Mammary epithelial cell (primary cell): ENCODE measurements at regions of chr9 and their contacts with region 1.

Region 1: GRCh38 chr9:95317119-95317892 is at the start of gene FANCC:
- DNase-seq: peak; percentile 81
- H3K4me3 ChIP-seq: peak within 1 kb of the TSS; percentile 94 to 100 (median 95)
- H3K27ac ChIP-seq: peak within 1 kb of the TSS; percentile 94
- H3K4me1 ChIP-seq: peaks cover 22% of the 10 kb centered on the region
- H3K27me3 ChIP-seq: no peaks in the 10 kb centered on the region
- CTCF ChIP-seq: no peak
- total RNA-seq, gene FANCC: 4.2 to 12.9 TPM

Region 2: DNA sequence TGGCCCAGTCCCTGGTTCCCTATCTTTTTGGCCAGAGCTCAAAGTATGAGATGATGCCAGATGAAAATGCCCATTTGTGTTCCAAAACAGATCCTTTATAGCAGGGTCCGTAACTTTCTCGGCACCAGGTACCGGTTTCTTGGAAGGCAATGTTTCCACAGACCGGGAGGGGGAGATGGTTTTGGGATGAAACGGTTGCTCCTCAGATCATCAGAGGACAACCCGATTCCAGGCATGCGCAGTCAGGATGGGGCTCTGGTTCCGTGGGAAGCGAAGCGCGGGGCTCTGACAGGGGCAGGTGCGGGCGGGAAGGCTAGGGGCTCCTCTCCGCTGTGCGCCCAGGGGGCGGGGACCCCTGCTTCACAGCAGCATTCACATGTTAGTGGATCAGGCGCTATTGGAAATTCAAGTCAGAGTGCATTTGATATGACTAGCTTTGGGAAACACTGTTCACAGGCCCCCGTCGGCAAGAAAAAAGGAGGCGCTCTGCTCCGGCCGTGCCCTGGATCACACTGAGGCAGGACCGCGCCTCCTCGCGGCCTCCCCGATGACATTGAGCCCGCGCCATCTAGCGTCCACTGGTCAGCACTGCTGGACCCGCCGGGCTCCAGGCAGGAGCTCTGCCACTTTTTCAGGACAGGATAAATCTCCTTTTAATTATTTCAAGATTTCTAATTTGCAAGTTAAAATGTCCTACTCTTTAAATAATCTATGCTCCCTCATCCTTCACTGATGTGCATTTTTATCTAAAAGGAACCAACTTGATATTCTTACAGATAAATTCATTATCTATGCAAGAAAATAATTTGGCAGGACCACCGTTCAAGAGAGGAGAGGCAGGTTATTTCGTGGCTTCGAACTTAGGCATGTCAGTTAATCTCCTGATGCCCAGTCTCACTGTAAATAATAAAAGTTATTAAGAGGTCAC is 189.8 kb before region 1 on chr9:
- CTCF ChIA-PET with region 1: no interaction called
- dilution Hi-C with region 1: no loop called
- in situ Hi-C with region 1: no loop called
- intact Hi-C with region 1: no loop called
- DNase-seq: peak; percentile 65
- H3K4me3 ChIP-seq: peak overlapping the region; percentile 6 to 44 (median 29)
- H3K27ac ChIP-seq: no peak overlapping the region
- H3K4me1 ChIP-seq: peaks cover 5% of the 10 kb centered on the region
- H3K27me3 ChIP-seq: no peaks in the 10 kb centered on the region
- CTCF ChIP-seq: peak; percentile 94 to 100

Region 3: GRCh38 chr9:95249986-95250385 is 67.3 kb before region 1 on chr9:
- CTCF ChIA-PET with region 1: no interaction called
- dilution Hi-C with region 1: loop called (anchors 5 kb)
- in situ Hi-C with region 1: no loop called
- intact Hi-C with region 1: no loop called
- DNase-seq: peak; percentile 48
- H3K4me3 ChIP-seq: no peak overlapping the region
- H3K27ac ChIP-seq: no peak overlapping the region
- H3K4me1 ChIP-seq: peaks cover 5% of the 10 kb centered on the region
- H3K27me3 ChIP-seq: no peaks in the 10 kb centered on the region
- CTCF ChIP-seq: no peak